Activated naive CD4-positive, alpha-beta T cell treated with anti-CD3 and anti-CD28 coated beads, Interleukin-2, amount 10 ng/mL, durations not matched to agents 7 days and 5 days (primary cell): ENCODE measurements at regions of chr2 and their contacts with region 1.

Region 1: GRCh38 chr2:100580367-100581276 is 17.8 kb downstream of the PDCL3 start:
- DNase-seq: peak; percentile 69
- H3K4me3 Mint-ChIP-seq: peak overlapping the region; percentile 68
- H3K27ac Mint-ChIP-seq: peak overlapping the region; percentile 91
- H3K4me1 Mint-ChIP-seq: peaks cover 60% of the 10 kb centered on the region
- H3K27me3 Mint-ChIP-seq: no peaks in the 10 kb centered on the region

Region 2: GRCh38 chr2:100524331-100524730 is 56.3 kb before region 1 on chr2:
- CTCF ChIA-PET with region 1: no interaction called
- DNase-seq: no peak
- H3K4me3 Mint-ChIP-seq: no peak overlapping the region
- H3K27ac Mint-ChIP-seq: no peak overlapping the region
- H3K4me1 Mint-ChIP-seq: no peaks in the 10 kb centered on the region
- H3K27me3 Mint-ChIP-seq: peaks cover 10% of the 10 kb centered on the region

Region 3: GRCh38 chr2:100592226-100592625 is 11.6 kb after region 1 on chr2:
- CTCF ChIA-PET with region 1: interaction called, 13 read pairs
- DNase-seq: no peak
- H3K4me3 Mint-ChIP-seq: no peak overlapping the region
- H3K27ac Mint-ChIP-seq: no peak overlapping the region
- H3K4me1 Mint-ChIP-seq: peaks cover 43% of the 10 kb centered on the region
- H3K27me3 Mint-ChIP-seq: peaks cover 20% of the 10 kb centered on the region

Region 4: DNA sequence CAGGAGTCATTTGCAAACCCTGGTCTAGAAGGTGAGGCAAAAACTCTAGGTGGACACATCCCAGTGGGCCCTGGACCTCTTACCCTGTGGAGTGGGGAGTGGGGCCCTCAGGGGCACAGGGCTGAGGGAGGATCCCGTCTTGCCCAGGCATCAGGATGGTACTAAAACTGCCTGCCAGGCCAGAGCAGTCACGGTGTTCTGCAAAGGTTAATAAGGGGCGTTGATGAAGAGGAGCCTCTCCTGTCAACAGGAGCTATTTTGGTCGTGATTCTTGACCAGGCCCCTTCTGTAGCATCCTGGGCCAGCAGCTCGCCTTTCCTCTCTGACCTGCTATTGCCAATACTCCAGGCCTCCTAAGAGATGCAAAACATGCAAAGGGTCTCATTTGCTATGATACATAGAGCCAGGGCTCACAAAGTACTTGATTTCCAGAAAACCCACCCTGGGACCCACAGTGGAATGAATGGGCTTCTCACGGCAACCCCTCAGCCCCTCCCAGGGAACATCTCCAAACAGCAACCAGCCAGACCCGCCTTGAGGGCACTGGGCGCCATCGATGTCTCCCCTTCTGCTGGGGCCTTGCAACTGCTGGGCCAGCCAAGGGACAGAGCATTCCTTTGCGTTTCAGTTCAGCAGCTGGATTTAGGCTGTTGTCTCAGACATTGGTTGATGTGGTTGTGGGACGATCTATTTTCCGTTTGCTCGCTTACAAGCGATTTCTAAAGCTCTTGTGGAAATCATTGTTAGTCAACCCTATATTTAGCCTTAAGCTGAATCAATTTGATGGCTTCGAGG is 93.3 kb after region 1 on chr2:
- CTCF ChIA-PET with region 1: no interaction called
- DNase-seq: no peak
- H3K4me3 Mint-ChIP-seq: no peak overlapping the region
- H3K27ac Mint-ChIP-seq: no peak overlapping the region
- H3K4me1 Mint-ChIP-seq: no peaks in the 10 kb centered on the region
- H3K27me3 Mint-ChIP-seq: peaks cover 9% of the 10 kb centered on the region

Region 5: GRCh38 chr2:100870652-100871531 is 290.3 kb after region 1 on chr2:
- CTCF ChIA-PET with region 1: no interaction called
- DNase-seq: no peak
- H3K4me3 Mint-ChIP-seq: no peak overlapping the region
- H3K27ac Mint-ChIP-seq: no peak overlapping the region
- H3K4me1 Mint-ChIP-seq: peaks cover 4% of the 10 kb centered on the region
- H3K27me3 Mint-ChIP-seq: peaks cover 2% of the 10 kb centered on the region